Psoas muscle (tissue), 8 donors: ENCODE measurements at regions of chr6 and their contacts with region 1.

Region 1: DNA sequence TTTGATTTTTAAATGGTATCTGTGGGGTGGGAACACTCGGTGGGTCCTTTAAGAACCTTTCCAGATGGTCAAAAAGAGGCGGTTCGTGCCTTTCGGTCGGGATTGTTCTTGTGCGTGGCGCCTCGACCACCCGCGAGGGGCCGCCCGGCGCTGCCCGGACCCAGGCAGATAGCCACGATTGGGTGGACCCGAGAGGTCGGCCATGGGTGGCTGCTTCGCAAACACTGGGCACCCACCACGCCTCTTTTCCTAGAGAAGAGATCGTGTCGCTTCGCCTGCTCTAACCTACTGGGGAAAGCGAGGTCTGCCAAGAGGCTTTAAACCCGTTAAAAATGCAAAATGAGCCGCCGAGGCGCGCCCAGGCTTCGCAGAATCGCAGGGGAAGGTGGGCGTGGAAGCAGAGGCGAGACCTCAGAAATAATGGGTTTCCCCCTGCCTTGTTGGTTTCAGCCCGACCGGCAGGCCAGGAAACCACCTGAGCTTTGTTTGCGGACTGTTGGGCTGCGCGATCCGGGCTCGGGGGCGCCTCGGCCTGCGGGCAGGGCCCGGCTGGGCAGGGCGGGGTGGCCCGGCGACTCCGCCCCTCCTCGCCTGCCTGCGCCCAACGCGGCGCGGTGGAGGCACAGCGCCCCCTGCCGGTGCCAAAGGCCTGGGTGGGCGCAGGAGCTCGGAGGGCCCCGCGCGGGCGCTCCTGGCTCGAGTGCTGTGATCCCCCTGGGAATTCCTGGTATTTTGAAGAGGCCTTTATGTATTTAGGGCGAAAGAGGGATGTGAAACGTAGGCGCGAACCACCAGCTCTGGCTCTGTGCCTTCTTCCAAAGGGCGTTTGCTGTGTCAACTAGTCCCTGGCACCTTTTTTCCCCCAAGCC is 1.6 kb downstream of the MARCKS start:
- DNase-seq: peak; percentile 89 to 94
- ATAC-seq: peak; percentile 84 to 95 (median 92)
- H3K4me3 ChIP-seq: peak overlapping the region; percentile 96
- H3K27ac ChIP-seq: peak overlapping the region; percentile 95
- H3K4me1 ChIP-seq: peaks cover 5% of the 10 kb centered on the region
- H3K27me3 ChIP-seq: no peaks in the 10 kb centered on the region
- CTCF ChIP-seq: peak; percentile 100

Region 2: GRCh38 chr6:113306552-113307145 is 552.1 kb before region 1 on chr6:
- intact Hi-C with region 1: loop called in 1 of 2 experiments (anchors 5 kb)
- DNase-seq: peak; percentile 44 to 70
- ATAC-seq: peak; percentile 30 to 91 (median 69)
- H3K4me3 ChIP-seq: no peak overlapping the region
- H3K27ac ChIP-seq: no peak overlapping the region
- H3K4me1 ChIP-seq: no peaks in the 10 kb centered on the region
- H3K27me3 ChIP-seq: no peaks in the 10 kb centered on the region
- CTCF ChIP-seq: peak; percentile 42

Region 3: GRCh38 chr6:113591896-113592827 is 266.6 kb before region 1 on chr6:
- intact Hi-C with region 1: loop called in 1 of 2 experiments (anchors 10 kb)
- DNase-seq: no peak
- ATAC-seq: no peak
- H3K4me3 ChIP-seq: no peak overlapping the region
- H3K27ac ChIP-seq: no peak overlapping the region
- H3K4me1 ChIP-seq: no peaks in the 10 kb centered on the region
- H3K27me3 ChIP-seq: no peaks in the 10 kb centered on the region
- CTCF ChIP-seq: no peak

Region 4: GRCh38 chr6:113732384-113732966 is 126.2 kb before region 1 on chr6:
- intact Hi-C with region 1: loop called in 1 of 2 experiments (anchors 5 kb)
- DNase-seq: peak in 1 of 2 donors; percentile 50
- ATAC-seq: peak; percentile 81 to 96 (median 90)
- H3K4me3 ChIP-seq: peak overlapping the region; percentile 39
- H3K27ac ChIP-seq: peak overlapping the region; percentile 47
- H3K4me1 ChIP-seq: peaks cover 11% of the 10 kb centered on the region
- H3K27me3 ChIP-seq: no peaks in the 10 kb centered on the region
- CTCF ChIP-seq: peak; percentile 28

Region 5: DNA sequence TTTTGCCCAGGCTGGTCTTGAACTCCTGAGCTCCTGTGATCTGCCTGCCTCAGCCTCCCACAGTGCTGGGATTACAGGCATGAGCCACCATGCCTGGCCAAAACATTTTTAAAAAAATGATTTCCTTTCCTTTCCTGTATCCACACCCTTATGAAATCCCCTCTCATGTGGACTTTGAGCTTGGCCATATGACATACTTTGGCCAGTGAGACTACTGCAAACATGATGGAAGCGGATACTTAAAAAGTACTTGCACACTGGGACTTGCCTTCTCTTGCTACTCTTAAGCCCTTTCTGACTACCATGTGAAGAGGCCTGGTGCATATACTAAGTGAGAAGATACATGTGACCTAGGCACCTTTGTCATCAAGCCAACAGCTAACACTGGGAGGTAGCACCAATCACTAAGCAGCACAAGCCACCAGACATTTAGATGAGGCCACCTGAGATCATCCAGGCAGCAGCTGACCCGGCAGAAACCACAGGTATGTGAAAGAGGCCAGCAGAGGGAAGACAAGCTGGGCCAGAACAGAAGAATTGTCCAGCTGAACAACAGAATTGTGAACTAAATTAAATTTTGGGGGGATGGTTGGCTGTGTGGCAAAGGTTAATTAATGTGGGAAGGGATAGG is 190.8 kb after region 1 on chr6:
- intact Hi-C with region 1: no loop called
- DNase-seq: no peak
- ATAC-seq: no peak
- H3K4me3 ChIP-seq: no peak overlapping the region
- H3K27ac ChIP-seq: no peak overlapping the region
- H3K4me1 ChIP-seq: no peaks in the 10 kb centered on the region
- H3K27me3 ChIP-seq: no peaks in the 10 kb centered on the region
- CTCF ChIP-seq: no peak